Activated B cell treated with CpG ODN at 0.5 μM for 24 hours (primary cell): ENCODE measurements at regions of chr10 and their contacts with region 1.

Region 1: DNA sequence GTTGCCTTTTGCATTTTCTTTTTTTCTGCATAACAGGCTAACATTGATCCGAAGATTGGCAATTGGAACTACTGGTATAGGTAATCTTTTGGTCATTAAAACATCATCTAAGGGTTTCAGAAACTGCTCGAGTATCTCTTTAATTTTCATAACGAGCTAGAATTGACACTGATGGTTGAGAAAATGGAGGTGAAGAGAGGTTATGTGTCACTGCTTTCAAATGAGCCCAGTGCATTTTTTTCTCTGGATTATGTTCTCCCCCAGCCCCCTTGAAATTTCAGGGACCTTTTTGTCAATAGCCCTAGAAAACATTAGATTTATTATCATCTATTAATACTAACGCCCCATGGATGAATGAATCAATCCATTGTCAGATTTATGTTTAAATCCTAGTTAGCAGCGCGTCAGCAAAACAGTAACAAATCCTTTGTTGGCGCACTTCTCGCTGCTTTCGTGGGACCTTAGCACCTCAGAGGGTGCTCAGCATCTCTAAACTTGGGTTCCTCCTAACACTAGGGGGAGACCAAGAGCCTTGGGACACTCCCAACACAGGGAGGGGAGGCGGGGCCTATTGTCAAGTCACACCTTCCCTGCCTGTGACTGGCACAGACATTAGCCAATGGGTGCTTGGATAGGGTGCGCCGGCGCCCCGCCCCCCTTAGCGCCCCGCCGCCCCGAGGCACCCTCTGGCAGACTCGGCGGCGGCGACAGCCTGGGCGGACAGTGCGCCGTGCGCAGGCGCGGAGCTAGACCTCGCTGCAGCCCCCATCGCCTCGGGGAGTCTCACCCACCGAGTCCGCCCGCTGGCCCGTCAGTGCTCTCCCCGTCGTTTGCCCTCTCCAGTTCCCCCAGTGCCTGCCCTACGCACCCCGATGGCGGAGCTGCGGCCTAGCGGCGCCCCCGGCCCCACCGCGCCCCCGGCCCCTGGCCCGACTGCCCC is at the start of gene SUFU:
- DNase-seq: peak; percentile 88
- ATAC-seq: peak; percentile 74
- H3K4me3 Mint-ChIP-seq: no peak within 1 kb of the TSS
- H3K27ac Mint-ChIP-seq: peak within 1 kb of the TSS; percentile 68
- H3K4me1 Mint-ChIP-seq: peaks cover 23% of the 10 kb centered on the region
- H3K27me3 Mint-ChIP-seq: no peaks in the 10 kb centered on the region
- CTCF ChIP-seq: no peak
- total RNA-seq, gene SUFU: 5.7 and 7.4 TPM in 2 replicates

Region 2: GRCh38 chr10:101353692-101354327 is 1149.7 kb before region 1 on chr10 and contains the start of gene BTRC:
- CTCF ChIA-PET with region 1: no interaction called
- POLR2A ChIA-PET with region 1: no interaction called
- intact Hi-C with region 1: loop called (anchors 10 kb)
- DNase-seq: peak; percentile 89
- ATAC-seq: peak; percentile 96
- H3K4me3 Mint-ChIP-seq: peak within 1 kb of the TSS; percentile 99
- H3K27ac Mint-ChIP-seq: peak within 1 kb of the TSS; percentile 90
- H3K4me1 Mint-ChIP-seq: peaks cover 24% of the 10 kb centered on the region
- H3K27me3 Mint-ChIP-seq: peaks cover 18% of the 10 kb centered on the region
- CTCF ChIP-seq: no peak
- total RNA-seq, gene BTRC: 11.8 and 19.4 TPM in 2 replicates

Region 3: DNA sequence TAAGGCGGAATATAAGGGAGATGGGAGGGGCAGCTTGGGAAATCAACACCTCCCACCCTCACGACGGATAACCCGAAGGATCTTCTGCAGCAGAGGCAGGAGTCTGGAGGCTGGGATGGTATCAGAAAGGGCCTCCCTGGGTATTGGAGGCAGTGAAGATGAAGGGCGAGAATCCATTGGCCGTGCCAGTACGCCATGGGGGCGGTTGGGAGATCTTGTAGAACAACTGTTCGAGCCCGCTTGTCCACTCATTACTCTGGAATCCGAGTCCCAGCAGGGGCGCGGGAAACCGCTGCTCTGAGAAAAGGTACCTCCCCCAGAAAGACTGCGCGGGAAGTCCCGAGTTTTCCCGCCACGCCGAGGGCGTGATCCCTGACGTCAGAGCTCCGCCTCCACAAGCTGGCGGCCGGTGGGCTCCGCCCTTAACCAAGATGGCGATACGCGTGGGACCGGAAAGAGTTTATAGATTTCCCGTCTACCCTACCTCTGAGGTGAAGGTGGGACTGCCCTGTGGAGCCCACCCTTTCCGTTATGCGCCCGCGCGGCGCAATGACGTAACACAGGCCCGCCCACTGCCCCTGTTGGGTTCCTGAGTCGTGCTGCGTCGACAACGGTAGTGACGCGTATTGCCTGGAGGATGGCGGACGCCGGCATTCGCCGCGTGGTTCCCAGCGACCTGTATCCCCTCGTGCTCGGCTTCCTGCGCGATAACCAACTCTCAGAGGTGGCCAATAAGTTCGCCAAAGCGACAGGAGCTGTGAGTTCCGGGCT is 351.6 kb before region 1 on chr10 and contains the start of gene NOLC1:
- CTCF ChIA-PET with region 1: no interaction called
- POLR2A ChIA-PET with region 1: interaction called, 7 read pairs
- intact Hi-C with region 1: loop called (anchors 1 kb)
- DNase-seq: peak; percentile 99
- ATAC-seq: peak; percentile 96
- H3K4me3 Mint-ChIP-seq: peak within 1 kb of the TSS; percentile 97
- H3K27ac Mint-ChIP-seq: peak within 1 kb of the TSS; percentile 93
- H3K4me1 Mint-ChIP-seq: peaks cover 35% of the 10 kb centered on the region
- H3K27me3 Mint-ChIP-seq: no peaks in the 10 kb centered on the region
- CTCF ChIP-seq: no peak
- total RNA-seq, gene NOLC1: 95.1 and 106 TPM in 2 replicates

Region 4: GRCh38 chr10:102394079-102394800 is 109.3 kb before region 1 on chr10:
- CTCF ChIA-PET with region 1: interaction called, 3 read pairs
- POLR2A ChIA-PET with region 1: interaction called, 29 read pairs
- intact Hi-C with region 1: loop called (anchors 1 kb)
- DNase-seq: peak; percentile 99
- ATAC-seq: peak; percentile 79
- H3K4me3 Mint-ChIP-seq: peak overlapping the region; percentile 94
- H3K27ac Mint-ChIP-seq: peak overlapping the region; percentile 97
- H3K4me1 Mint-ChIP-seq: peaks cover 46% of the 10 kb centered on the region
- H3K27me3 Mint-ChIP-seq: no peaks in the 10 kb centered on the region
- CTCF ChIP-seq: no peak

Region 5: GRCh38 chr10:102461187-102462054 is 42.1 kb before region 1 on chr10:
- CTCF ChIA-PET with region 1: no interaction called
- POLR2A ChIA-PET with region 1: interaction called, 5 read pairs
- intact Hi-C with region 1: loop called (anchors 1 kb)
- DNase-seq: peak; percentile 90
- ATAC-seq: peak; percentile 99
- H3K4me3 Mint-ChIP-seq: peak overlapping the region; percentile 88
- H3K27ac Mint-ChIP-seq: peak overlapping the region; percentile 85
- H3K4me1 Mint-ChIP-seq: peaks cover 31% of the 10 kb centered on the region
- H3K27me3 Mint-ChIP-seq: no peaks in the 10 kb centered on the region
- CTCF ChIP-seq: no peak

Region 6: DNA sequence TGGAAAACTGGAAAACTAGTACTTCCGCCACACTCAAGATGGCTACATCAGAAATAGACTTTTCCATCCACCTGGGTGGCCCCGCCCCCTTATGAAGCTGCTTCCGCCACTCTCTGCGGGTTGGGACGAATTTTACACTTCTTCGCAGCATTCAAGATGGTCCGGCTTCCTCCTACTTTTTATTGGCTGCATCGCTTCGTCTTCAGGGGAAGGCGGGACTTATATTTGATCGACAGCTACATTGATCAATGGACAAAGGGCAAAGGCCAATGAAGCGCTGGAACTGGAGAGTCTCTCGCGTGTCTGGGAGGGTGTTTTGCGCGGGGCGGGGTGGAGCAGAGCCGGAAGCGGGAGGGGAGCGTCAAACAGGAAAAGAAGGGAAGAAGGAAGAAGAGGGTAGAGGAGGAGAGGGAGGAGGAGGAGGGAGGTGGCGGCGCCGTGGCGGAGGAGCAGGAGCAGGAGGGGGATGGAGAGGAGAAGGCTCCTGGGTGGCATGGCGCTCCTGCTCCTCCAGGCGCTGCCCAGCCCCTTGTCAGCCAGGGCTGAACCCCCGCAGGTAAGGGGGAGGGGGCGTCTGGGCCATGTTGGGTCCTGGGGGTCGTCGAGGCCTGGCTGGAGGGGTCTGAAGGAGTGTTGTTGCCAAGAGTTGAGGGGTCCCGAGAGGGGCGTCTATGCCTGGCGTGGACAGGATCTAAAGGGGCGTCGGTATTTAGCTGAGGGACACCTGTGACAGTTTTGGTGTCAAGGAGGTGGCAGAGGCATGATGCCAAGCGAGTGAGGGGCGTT is 240.2 kb after region 1 on chr10 and contains the start of gene WBP1L:
- CTCF ChIA-PET with region 1: no interaction called
- POLR2A ChIA-PET with region 1: interaction called, 4 read pairs
- intact Hi-C with region 1: loop called (anchors 2 kb)
- DNase-seq: peak; percentile 81
- ATAC-seq: peak; percentile 98
- H3K4me3 Mint-ChIP-seq: peak within 1 kb of the TSS; percentile 93
- H3K27ac Mint-ChIP-seq: peak within 1 kb of the TSS; percentile 87
- H3K4me1 Mint-ChIP-seq: peaks cover 47% of the 10 kb centered on the region
- H3K27me3 Mint-ChIP-seq: no peaks in the 10 kb centered on the region
- CTCF ChIP-seq: no peak
- total RNA-seq, gene WBP1L: 30.5 and 30.8 TPM in 2 replicates

Region 7: DNA sequence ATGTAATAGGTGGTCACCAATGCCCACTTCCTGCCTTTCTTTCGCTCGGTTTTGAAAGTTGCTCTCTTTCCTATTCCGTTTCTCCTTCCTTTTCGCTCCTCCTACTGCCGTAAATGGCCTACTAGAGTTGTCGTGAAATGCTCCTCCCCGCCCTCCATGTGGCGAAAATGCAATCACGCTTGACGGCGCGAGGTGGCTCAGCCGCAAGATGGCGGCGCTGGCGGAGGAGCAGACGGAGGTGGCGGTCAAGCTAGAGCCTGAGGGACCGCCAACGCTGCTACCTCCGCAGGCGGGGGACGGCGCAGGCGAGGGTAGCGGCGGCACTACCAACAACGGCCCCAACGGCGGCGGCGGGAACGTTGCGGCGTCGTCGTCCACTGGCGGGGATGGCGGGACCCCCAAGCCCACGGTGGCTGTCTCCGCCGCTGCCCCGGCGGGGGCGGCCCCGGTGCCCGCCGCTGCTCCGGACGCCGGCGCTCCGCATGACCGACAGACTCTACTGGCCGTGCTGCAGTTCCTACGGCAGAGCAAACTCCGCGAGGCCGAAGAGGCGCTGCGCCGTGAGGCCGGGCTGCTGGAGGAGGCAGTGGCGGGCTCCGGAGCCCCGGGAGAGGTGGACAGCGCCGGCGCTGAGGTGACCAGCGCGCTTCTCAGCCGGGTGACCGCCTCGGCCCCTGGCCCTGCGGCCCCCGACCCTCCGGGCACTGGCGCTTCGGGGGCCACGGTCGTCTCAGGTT is 864.4 kb after region 1 on chr10 and contains the start of gene TAF5:
- CTCF ChIA-PET with region 1: no interaction called
- POLR2A ChIA-PET with region 1: no interaction called
- intact Hi-C with region 1: loop called (anchors 2 kb)
- DNase-seq: peak; percentile 79
- ATAC-seq: peak; percentile 72
- H3K4me3 Mint-ChIP-seq: peak within 1 kb of the TSS; percentile 90
- H3K27ac Mint-ChIP-seq: peak within 1 kb of the TSS; percentile 87
- H3K4me1 Mint-ChIP-seq: peaks cover 12% of the 10 kb centered on the region
- H3K27me3 Mint-ChIP-seq: no peaks in the 10 kb centered on the region
- CTCF ChIP-seq: no peak
- total RNA-seq, gene TAF5: 3.6 and 3.8 TPM in 2 replicates